ENCODE measurements at regions of chr7 and their contacts with region 1.

Region 1: GRCh38 chr7:43582503-43583423 is at the start of gene STK17A:
- DNase-seq: peak; percentile 93
- H3K4me3 Mint-ChIP-seq: peak within 1 kb of the TSS; percentile 96
- H3K27ac Mint-ChIP-seq: peak within 1 kb of the TSS; percentile 99
- H3K4me1 Mint-ChIP-seq: peaks cover 31% of the 10 kb centered on the region
- H3K27me3 Mint-ChIP-seq: peaks cover 15% of the 10 kb centered on the region
- total RNA-seq, gene STK17A: 74.4 to 74.8 TPM

Region 2: DNA sequence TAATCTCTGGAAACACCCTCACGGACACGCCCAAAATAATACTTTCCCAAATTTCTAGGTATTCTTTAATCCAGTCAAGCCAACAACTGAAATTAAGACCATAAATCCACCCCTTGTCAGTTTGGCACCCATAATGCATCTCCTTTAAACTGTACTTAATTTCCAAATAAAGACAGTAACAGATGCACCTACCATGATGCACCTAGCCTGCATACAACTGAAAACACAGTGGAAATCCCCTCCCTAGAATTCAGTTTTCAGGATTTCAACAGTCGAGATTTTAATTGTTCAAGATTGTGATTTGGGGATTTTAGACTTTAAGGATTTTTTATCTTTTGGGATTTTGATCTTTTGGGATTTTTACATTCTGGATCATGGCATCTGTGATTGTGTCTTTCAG is 17.3 kb after region 1 on chr7:
- CTCF ChIA-PET with region 1: interaction called, 17 read pairs
- POLR2A ChIA-PET with region 1: interaction called, 4 read pairs
- DNase-seq: no peak
- H3K4me3 Mint-ChIP-seq: no peak overlapping the region
- H3K27ac Mint-ChIP-seq: no peak overlapping the region
- H3K4me1 Mint-ChIP-seq: peaks cover 37% of the 10 kb centered on the region
- H3K27me3 Mint-ChIP-seq: no peaks in the 10 kb centered on the region

Region 3: GRCh38 chr7:43647673-43648472 is 65.1 kb after region 1 on chr7:
- CTCF ChIA-PET with region 1: interaction called, 31 read pairs
- POLR2A ChIA-PET with region 1: interaction called, 4 read pairs
- DNase-seq: peak; percentile 42
- H3K4me3 Mint-ChIP-seq: peak overlapping the region; percentile 84
- H3K27ac Mint-ChIP-seq: peak overlapping the region; percentile 97
- H3K4me1 Mint-ChIP-seq: peaks cover 95% of the 10 kb centered on the region
- H3K27me3 Mint-ChIP-seq: no peaks in the 10 kb centered on the region

Region 4: DNA sequence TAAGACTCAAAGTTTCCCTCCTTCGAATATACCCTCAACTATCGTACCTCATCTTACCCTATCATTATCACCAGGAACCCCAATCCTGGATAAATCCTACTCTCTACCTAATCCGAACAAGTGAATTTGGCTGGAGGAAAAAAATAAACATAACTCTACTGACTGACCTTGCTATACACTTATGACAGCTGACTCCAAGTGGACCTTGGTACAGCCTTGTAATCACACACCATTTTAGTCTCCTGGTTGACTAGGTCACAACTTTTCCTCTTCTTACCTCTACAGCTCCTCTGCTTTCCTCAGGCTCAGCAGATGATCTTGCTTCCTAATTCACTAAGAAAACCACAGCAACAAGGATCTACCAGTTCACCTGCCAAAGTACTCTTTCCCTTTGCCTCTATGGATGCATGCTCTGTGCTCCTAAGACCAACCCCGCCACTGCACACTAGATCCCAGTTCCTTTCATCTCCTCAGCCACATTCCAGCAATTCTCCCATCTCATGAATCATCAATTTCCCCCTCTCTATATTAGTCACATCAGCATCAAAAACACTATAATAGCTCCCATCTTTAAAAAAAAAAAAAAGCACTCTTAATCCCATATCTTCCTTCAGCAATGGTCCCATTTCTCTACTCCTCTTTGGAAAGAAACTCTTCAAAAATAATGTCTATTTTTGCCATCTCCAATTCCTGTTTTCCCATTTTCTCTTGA is 111.1 kb after region 1 on chr7:
- CTCF ChIA-PET with region 1: interaction called, 177 read pairs
- POLR2A ChIA-PET with region 1: interaction called, 23 read pairs
- DNase-seq: no peak
- H3K4me3 Mint-ChIP-seq: no peak overlapping the region
- H3K27ac Mint-ChIP-seq: no peak overlapping the region
- H3K4me1 Mint-ChIP-seq: peaks cover 28% of the 10 kb centered on the region
- H3K27me3 Mint-ChIP-seq: no peaks in the 10 kb centered on the region

Region 5: GRCh38 chr7:43729214-43729923 is 146.6 kb after region 1 on chr7 and contains the start of gene COA1:
- CTCF ChIA-PET with region 1: interaction called, 31 read pairs
- POLR2A ChIA-PET with region 1: interaction called, 3 read pairs
- DNase-seq: peak; percentile 80
- H3K4me3 Mint-ChIP-seq: peak within 1 kb of the TSS; percentile 91
- H3K27ac Mint-ChIP-seq: peak within 1 kb of the TSS; percentile 87
- H3K4me1 Mint-ChIP-seq: peaks cover 32% of the 10 kb centered on the region
- H3K27me3 Mint-ChIP-seq: peaks cover 4% of the 10 kb centered on the region
- total RNA-seq, gene COA1: 44.8 to 47.1 TPM

Measured in activated CD4-positive, alpha-beta T cell treated with anti-CD3 and anti-CD28 coated beads, Interleukin-2, amount 10 ng/mL, durations not matched to agents 7 days and 5 days (primary cell).